Activated CD4-positive, alpha-beta T cell treated with anti-CD3 and anti-CD28 coated beads for 36 hours (primary cell): ENCODE measurements at regions of chr13 and their contacts with region 1.

Region 1: DNA sequence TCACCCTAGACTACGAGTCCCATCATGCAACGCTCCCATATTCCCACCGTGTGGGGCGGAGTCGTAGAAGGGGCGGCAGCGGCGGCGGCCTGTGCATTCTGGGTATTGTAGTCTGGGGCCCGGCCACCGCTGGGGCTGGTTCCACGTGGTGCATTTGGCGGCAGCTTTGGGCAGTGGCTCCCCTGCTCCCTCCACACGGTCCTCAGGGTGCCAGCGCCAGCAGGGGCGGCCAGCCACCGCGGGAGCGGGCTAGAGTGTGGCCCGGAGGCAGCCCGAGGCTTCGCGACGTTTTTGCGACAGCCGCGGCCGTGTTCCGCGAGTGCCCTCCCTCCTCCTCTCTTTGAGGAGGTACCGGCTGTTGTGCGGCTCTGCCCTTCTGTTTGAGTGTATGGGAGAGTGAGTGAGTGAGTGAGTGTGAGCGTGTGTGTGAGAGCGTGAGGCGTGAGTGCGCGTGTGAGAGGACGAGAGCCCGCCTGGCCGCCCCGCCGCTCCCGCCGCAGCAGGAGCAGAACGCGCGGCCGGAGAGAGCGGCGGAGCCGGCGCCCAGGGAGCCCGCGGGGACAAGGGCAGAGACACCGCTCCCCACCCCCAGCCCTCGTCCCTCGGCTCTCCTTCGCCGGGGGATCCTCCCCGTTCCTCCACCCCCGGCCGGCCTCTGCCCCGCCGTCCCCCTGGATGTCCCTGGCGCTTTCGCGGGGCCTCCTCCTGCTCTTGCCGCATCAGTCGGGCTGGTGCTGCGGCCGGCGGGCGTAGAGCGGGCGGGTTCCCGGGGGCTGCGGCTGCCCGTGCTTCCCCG is at the start of gene CDK8:
- DNase-seq: peak; percentile 93
- ATAC-seq: peak; percentile 93
- H3K4me3 Mint-ChIP-seq: peak within 1 kb of the TSS; percentile 82
- H3K27ac Mint-ChIP-seq: peak within 1 kb of the TSS; percentile 84
- H3K4me1 Mint-ChIP-seq: peaks cover 38% of the 10 kb centered on the region
- H3K27me3 Mint-ChIP-seq: no peaks in the 10 kb centered on the region
- total RNA-seq, gene CDK8: 17.4 to 24.3 TPM

Region 2: GRCh38 chr13:25301347-25302047 is 952.5 kb before region 1 on chr13 and contains the start of gene NUP58:
- CTCF ChIA-PET with region 1: no interaction called
- POLR2A ChIA-PET with region 1: no interaction called
- intact Hi-C with region 1: loop called in 1 of 2 experiments (anchors 2 kb)
- DNase-seq: peak; percentile 97
- ATAC-seq: peak; percentile 98
- H3K4me3 Mint-ChIP-seq: peak within 1 kb of the TSS; percentile 94
- H3K27ac Mint-ChIP-seq: peak within 1 kb of the TSS; percentile 95
- H3K4me1 Mint-ChIP-seq: peaks cover 30% of the 10 kb centered on the region
- H3K27me3 Mint-ChIP-seq: peaks cover 4% of the 10 kb centered on the region
- total RNA-seq, gene NUP58: 134 to 137 TPM

Region 3: DNA sequence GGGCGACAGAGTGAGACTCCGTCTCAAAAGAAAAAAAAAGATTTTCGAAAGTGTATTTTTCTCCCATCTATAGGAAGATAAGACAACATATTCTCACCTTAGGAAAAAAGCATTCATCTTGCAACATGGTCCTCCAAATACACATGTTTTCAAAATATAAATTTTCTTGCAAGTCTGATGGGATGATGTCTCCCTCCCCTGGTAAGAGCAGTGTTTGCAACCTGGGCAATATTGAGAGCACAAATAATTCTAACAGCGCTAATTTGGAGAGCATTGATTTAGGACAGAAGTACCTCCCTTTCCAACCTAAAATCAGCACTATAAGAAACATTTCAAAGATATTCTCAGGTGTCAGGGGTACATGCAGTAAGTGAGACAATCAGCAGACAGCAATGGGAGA is 141.1 kb before region 1 on chr13:
- CTCF ChIA-PET with region 1: no interaction called
- POLR2A ChIA-PET with region 1: no interaction called
- intact Hi-C with region 1: no loop called
- DNase-seq: no peak
- ATAC-seq: no peak
- H3K4me3 Mint-ChIP-seq: no peak overlapping the region
- H3K27ac Mint-ChIP-seq: no peak overlapping the region
- H3K4me1 Mint-ChIP-seq: no peaks in the 10 kb centered on the region
- H3K27me3 Mint-ChIP-seq: peaks cover 2% of the 10 kb centered on the region

Region 4: DNA sequence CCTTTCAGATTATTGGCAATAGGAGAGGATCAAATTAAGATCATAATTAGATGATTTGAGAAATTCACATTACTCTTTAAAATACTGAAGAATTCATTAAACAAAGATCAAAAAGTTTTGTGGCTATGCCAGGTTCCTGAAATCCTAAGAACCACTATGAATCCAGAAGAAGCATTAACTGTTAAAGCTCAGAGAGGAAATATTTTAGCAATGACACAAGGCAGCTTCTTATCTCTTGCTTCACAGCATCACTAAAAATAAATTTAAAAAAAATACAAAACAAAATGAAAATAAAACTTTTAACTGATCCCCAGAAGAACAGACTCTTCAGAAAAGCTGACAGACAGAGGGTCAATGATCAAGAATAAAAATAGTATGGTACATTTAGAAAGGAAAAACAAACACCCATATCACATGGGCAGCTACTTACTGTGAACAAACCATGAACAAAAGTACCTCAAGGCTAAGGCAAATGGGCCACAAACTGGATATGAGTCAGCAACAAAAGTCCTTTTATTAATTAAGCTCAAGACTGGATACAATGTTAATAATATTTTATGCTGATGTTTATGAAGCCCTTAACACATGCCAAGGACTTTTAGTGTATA is 51.5 kb before region 1 on chr13:
- CTCF ChIA-PET with region 1: no interaction called
- POLR2A ChIA-PET with region 1: no interaction called
- intact Hi-C with region 1: no loop called
- DNase-seq: no peak
- ATAC-seq: no peak
- H3K4me3 Mint-ChIP-seq: no peak overlapping the region
- H3K27ac Mint-ChIP-seq: no peak overlapping the region
- H3K4me1 Mint-ChIP-seq: no peaks in the 10 kb centered on the region
- H3K27me3 Mint-ChIP-seq: no peaks in the 10 kb centered on the region

Region 5: GRCh38 chr13:26300140-26300539 is 46.2 kb after region 1 on chr13:
- CTCF ChIA-PET with region 1: no interaction called
- POLR2A ChIA-PET with region 1: no interaction called
- intact Hi-C with region 1: no loop called
- DNase-seq: no peak
- ATAC-seq: no peak
- H3K4me3 Mint-ChIP-seq: no peak overlapping the region
- H3K27ac Mint-ChIP-seq: no peak overlapping the region
- H3K4me1 Mint-ChIP-seq: peaks cover 35% of the 10 kb centered on the region
- H3K27me3 Mint-ChIP-seq: no peaks in the 10 kb centered on the region

Region 6: DNA sequence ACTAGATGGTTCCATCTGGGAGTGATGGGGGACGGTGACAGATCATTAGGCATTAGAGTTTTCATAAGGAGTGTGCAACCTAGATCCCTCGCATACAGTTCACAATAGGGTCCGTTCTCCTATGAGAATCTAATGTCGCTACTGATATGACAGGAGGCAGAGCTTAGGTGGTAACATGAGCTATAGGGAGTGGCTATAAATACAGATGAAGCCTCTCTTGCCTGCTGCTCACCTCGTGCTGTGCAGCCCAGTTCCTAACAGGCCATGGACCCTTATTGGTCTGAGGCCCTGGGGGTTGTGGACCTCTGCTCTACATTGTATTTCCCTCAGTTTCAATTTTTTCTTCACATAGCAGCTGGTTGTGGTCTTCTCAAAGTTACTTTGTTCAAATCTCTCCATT is 56.5 kb after region 1 on chr13:
- CTCF ChIA-PET with region 1: no interaction called
- POLR2A ChIA-PET with region 1: no interaction called
- intact Hi-C with region 1: no loop called
- DNase-seq: no peak
- ATAC-seq: no peak
- H3K4me3 Mint-ChIP-seq: no peak overlapping the region
- H3K27ac Mint-ChIP-seq: peak overlapping the region; percentile 65
- H3K4me1 Mint-ChIP-seq: peaks cover 40% of the 10 kb centered on the region
- H3K27me3 Mint-ChIP-seq: no peaks in the 10 kb centered on the region